ENCODE measurements at regions of chr4 and their contacts with region 1.

Region 1: GRCh38 chr4:158729716-158730559 is 6.7 kb upstream of the PPID start:
- DNase-seq: peak in 4 of 6 donors; percentile 31 to 73 (median 48)
- ATAC-seq: peak; percentile 79 to 100 (median 98)
- H3K4me3 ChIP-seq: no peak overlapping the region
- H3K27ac ChIP-seq: no peak overlapping the region
- H3K4me1 ChIP-seq: no peaks in the 10 kb centered on the region
- H3K27me3 ChIP-seq: no peaks in the 10 kb centered on the region
- CTCF ChIP-seq: peak; percentile 27 to 77 (median 73)

Region 2: DNA sequence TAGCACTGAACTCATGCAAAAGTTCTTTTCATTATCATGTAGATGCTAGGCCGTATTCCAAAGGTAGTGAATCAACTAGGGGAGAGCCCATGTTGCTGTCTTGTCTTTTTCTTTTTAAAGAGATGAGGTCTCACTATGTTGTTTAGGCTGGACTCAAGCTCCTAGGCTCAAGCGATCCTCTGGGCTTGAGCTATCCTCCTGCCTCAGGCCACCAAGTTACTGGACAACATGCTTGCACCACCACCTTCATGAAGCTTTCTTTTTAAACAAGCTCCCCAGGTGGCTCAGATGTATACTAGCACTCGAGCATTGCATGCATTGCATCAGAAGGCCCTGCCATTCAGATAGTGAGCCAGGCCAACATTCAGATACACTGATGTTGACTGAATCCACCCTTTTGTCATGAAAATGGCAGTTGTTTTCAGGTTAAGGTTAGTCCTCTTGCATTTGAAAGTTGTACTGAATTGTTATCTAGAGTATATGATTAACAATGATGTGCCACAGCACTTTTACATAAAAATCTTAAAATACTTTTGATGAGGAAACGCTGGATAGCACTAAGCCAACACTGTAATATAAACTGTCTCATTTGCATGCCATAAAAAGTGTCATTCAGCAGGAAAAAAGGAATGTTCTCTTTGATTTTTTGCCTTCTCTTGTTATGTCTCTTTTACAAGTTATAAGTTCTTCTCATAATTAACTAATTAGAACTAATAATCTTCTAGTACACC is 115.5 kb after region 1 on chr4:
- intact Hi-C with region 1: loop called in 2 of 3 experiments (anchors 5 kb)
- DNase-seq: peak in 1 of 6 donors; percentile 34
- ATAC-seq: peak in 3 of 4 donors; percentile 43 to 66 (median 64)
- H3K4me3 ChIP-seq: no peak overlapping the region
- H3K27ac ChIP-seq: no peak overlapping the region
- H3K4me1 ChIP-seq: peaks cover 19 to 25% (median 20%) of the 10 kb centered on the region in 3 donors
- H3K27me3 ChIP-seq: no peaks in the 10 kb centered on the region
- CTCF ChIP-seq: no peak

Region 3: DNA sequence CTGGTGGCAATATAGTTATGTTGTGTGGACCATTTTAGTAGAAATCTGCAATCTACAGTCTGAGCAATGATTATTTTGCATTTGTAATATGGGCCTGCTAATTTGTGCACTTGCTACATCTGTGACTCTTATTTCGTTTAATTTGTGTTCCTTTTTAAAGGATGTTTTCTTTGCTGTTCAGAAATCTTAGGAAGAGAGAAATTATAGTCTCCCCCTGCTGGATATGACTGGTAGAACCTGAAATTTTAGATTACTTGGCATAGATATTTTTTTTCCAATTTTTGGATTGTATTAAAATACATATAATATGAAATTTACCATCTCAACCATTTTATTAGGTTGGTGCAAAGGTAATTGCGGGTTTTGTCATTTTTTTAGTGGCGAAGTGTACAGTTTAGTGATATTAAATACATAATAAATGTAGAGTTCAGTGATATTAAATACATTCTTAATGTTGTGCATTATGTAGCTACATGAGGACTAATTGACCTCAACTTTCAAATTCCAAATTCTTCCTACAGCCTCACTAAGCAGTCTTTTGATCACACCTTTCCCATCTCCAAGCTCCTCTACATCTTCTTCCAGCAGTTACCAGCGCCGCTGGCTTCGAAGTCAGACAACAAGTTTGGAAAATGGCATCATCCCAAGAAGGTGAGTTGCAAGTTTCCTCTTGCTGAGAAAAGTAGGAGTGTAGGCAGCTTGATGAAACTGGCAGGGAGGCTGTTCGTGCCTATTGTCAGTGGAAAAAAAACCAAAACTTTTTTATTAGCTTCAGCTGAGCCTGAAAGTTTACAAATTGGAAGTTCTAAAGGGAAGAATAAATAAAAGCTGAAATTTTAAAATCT is 121.1 kb after region 1 on chr4:
- intact Hi-C with region 1: loop called in 2 of 3 experiments (anchors 5 kb)
- DNase-seq: no peak
- ATAC-seq: peak in 3 of 4 donors; percentile 65 to 82 (median 67)
- H3K4me3 ChIP-seq: no peak overlapping the region
- H3K27ac ChIP-seq: peak overlapping the region in 1 of 4 donors; percentile 18
- H3K4me1 ChIP-seq: peaks cover 4 to 10% (median 7%) of the 10 kb centered on the region in 3 donors
- H3K27me3 ChIP-seq: no peaks in the 10 kb centered on the region
- CTCF ChIP-seq: peak in 3 of 4 donors; percentile 60 to 64 (median 60)